ENCODE measurements at regions of chr1 and their contacts with region 1.

Region 1: GRCh38 chr1:41482001-41482765 is 2.3 kb downstream of the EDN2 start:
- DNase-seq: no peak
- ATAC-seq: no peak
- H3K4me3 Mint-ChIP-seq: no peak overlapping the region
- H3K27ac Mint-ChIP-seq: no peak overlapping the region
- H3K4me1 Mint-ChIP-seq: peaks cover 3% of the 10 kb centered on the region
- H3K27me3 Mint-ChIP-seq: peaks cover 13% of the 10 kb centered on the region

Region 2: DNA sequence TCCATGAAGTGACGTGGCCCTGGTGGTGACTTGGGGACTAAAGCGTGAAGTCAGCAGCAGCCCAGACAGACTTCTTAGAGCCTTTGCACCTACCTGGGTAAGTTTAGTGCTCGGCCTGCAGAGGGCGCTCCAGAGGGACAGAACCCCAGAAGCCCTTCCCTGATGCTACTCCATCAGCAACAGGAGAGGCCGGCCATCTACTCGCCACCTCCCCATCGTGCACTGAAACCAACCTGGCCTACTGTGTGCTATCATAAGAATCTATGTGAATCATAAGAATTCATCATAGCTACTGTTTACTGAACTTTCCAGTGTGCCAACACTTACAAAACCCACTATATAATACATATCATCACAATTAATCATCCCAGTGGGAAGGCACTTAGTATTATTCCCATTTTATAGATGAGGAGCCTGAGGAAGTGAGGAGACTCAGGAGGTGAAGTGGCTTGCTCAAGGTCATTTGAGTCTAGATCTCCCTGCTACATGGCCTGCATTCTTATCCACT is 10.2 kb after region 1 on chr1:
- CTCF ChIA-PET with region 1: interaction called, 12 read pairs
- POLR2A ChIA-PET with region 1: interaction called, 4 read pairs
- DNase-seq: peak; percentile 54
- ATAC-seq: peak; percentile 21
- H3K4me3 Mint-ChIP-seq: no peak overlapping the region
- H3K27ac Mint-ChIP-seq: no peak overlapping the region
- H3K4me1 Mint-ChIP-seq: peaks cover 5% of the 10 kb centered on the region
- H3K27me3 Mint-ChIP-seq: peaks cover 22% of the 10 kb centered on the region

Region 3: GRCh38 chr1:42003443-42003842 is 521.3 kb after region 1 on chr1:
- CTCF ChIA-PET with region 1: no interaction called
- POLR2A ChIA-PET with region 1: no interaction called
- DNase-seq: no peak
- ATAC-seq: no peak
- H3K4me3 Mint-ChIP-seq: no peak overlapping the region
- H3K27ac Mint-ChIP-seq: no peak overlapping the region
- H3K4me1 Mint-ChIP-seq: peaks cover 1% of the 10 kb centered on the region
- H3K27me3 Mint-ChIP-seq: no peaks in the 10 kb centered on the region